Head of caudate nucleus (tissue), 42 donors: ENCODE measurements at regions of chr17 and their contacts with region 1.

Region 1: GRCh38 chr17:79563237-79564013 is 47.4 kb downstream of the RBFOX3 start:
- DNase-seq: peak in 3 of 42 donors; percentile 2 to 20 (median 13)

Region 2: DNA sequence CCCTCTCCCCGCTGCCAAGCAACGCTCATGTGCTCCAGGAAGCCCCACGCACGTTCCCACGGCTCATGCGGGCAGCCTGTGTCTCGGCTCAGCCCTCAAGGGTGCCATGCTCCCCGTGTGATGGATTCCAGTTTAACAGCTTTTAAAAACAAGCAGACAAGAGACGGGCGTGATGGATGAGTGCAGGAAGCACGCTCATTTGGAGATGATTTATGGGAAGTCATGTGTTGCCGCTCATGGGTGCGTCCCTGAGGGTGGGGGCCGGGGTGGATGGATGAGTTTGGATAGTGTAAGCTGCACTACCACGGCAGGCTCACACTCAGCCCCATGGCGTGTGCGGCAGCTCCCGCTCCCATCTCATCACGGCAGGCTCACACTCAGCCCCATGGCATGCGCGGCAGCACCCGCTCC is 85.4 kb before region 1 on chr17:
- intact Hi-C with region 1: no loop called
- DNase-seq: peak in 41 of 42 donors; percentile 27 to 84 (median 67)

Region 3: DNA sequence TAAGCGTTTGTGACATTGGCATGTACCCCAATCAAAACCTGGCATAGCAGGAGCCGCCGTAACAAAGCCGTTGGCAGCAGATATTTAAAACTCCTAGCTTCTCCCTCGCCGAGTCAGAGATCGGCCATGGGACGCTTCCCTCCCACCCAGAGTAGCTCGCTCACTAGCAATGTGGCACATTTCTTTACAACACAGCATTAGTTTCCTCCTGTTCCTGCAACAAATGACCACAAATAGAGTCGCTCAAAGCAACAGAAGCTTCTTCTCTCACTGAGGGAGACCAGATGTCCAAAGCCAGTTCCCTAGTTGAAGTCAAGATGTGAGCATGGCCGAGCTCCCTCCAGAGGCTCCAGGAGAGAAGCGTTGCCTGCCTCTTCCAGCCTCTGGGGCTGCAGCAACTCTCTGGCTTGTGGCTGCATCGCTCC is 59.2 kb before region 1 on chr17:
- intact Hi-C with region 1: loop called (anchors 10 kb)
- DNase-seq: peak in 10 of 42 donors; percentile 15 to 58 (median 38)

Region 4: DNA sequence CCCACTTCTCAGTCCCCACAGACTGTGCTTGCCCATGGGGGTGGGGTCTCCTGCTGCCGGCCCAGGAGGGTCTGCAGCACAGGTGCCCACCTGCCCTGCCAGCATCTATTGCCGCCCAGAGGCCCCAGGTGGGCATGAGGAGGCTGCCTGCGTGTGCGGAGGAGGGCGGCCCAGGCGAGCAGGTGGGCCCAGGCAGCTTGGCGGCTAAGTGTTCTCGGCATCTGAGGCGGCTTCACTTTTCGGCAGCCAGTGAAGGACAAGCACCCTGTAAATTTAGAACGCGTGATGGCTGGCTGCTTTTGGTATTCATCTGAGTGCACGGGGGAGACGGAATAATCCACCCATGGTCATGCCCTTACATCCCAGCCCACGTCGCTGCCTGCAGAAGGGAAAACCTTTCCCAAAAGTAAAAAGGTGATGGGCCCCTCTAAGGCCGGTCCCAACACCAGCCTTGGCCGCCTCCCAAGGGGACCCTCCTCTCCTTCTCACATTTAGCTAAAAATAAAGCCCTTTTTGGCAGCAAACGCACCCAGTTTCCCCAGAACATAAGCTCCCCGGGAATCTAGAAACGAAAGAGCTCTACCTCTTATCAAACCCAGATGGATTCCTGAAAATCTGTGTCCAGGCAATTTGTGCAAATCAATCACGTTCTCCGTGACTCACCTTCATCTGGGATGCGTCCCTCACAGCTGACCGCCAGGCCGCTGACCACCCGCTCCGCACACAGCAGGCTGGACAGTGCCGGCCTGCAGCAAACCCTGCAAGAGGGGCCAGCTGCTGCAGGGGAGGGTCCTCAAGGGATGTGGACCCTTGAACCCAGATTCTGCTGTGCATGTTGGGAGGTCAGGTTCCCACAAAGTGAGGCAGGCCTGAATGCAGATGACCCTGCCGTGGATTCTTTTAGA is 32.0 kb before region 1 on chr17:
- intact Hi-C with region 1: no loop called
- DNase-seq: peak in 1 of 42 donors; percentile 45